Caco-2 (cell line): ENCODE measurements at regions of chr1 and their contacts with region 1.

Region 1: GRCh38 chr1:58652651-58653184 is 47.1 kb downstream of the MYSM1 start:
- DNase-seq: peak; percentile 37 to 65
- H3K4me3 ChIP-seq: no peak overlapping the region
- H3K4me3 Mint-ChIP-seq: no peak overlapping the region
- H3K27ac Mint-ChIP-seq: no peak overlapping the region
- H3K4me1 ChIP-seq: 0 out of 2 replicates have a peak, but pooled peaks cover 5% of the 10 kb centered on the region
- H3K4me1 Mint-ChIP-seq: no peaks in the 10 kb centered on the region
- H3K27me3 ChIP-seq: no peaks in the 10 kb centered on the region
- H3K27me3 Mint-ChIP-seq: no peaks in the 10 kb centered on the region
- CTCF ChIP-seq: peak; percentile 48 to 62

Region 2: DNA sequence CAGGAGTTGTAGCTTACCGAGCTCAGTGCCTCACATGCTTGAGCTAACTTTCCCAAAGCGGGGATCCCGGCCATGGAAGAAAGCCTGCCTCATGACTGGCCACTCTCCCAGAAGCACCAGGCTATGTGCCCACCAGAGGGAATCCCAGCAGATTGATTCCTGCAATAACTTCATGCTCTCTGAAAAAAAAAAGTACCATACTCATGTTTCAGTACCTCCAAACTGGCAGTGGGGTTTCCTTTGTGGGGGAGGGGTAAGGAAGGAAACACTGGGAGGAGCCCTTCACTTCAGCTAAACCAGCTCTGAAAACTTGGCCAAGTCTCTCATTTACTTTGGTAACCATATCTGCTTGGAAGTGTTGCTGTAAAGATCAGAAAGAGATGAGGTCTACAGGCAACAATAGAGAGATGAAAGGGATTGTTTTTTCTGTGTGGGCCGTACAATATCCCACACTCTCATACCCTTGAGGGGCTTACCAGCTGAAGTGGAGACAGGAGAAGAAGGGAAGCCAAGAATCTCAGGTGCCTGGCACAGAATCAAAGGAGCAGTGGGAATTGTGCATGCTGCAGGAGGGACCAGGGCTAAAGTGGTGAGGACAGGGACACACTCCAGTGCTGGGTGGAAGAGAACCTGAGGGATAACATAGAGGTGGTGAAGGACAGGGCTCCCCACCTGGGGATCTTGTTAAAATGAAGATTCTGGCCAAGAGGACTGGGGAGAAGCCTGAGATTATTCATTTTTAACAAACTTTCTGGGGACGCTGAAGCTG is 33.2 kb before region 1 on chr1:
- CTCF ChIA-PET with region 1: no interaction called
- POLR2A ChIA-PET with region 1: no interaction called
- intact Hi-C with region 1: loop called (anchors 2 kb)
- DNase-seq: no peak
- H3K4me3 ChIP-seq: no peak overlapping the region
- H3K4me3 Mint-ChIP-seq: peak overlapping the region; percentile 62
- H3K27ac Mint-ChIP-seq: peak overlapping the region; percentile 95
- H3K4me1 ChIP-seq: peaks cover 27% of the 10 kb centered on the region
- H3K4me1 Mint-ChIP-seq: peaks cover 42% of the 10 kb centered on the region
- H3K27me3 ChIP-seq: no peaks in the 10 kb centered on the region
- H3K27me3 Mint-ChIP-seq: no peaks in the 10 kb centered on the region
- CTCF ChIP-seq: no peak